Activated CD4-positive, alpha-beta T cell treated with anti-CD3 and anti-CD28 coated beads for 36 hours (primary cell): ENCODE measurements at regions of chr2 and their contacts with region 1.

Region 1: DNA sequence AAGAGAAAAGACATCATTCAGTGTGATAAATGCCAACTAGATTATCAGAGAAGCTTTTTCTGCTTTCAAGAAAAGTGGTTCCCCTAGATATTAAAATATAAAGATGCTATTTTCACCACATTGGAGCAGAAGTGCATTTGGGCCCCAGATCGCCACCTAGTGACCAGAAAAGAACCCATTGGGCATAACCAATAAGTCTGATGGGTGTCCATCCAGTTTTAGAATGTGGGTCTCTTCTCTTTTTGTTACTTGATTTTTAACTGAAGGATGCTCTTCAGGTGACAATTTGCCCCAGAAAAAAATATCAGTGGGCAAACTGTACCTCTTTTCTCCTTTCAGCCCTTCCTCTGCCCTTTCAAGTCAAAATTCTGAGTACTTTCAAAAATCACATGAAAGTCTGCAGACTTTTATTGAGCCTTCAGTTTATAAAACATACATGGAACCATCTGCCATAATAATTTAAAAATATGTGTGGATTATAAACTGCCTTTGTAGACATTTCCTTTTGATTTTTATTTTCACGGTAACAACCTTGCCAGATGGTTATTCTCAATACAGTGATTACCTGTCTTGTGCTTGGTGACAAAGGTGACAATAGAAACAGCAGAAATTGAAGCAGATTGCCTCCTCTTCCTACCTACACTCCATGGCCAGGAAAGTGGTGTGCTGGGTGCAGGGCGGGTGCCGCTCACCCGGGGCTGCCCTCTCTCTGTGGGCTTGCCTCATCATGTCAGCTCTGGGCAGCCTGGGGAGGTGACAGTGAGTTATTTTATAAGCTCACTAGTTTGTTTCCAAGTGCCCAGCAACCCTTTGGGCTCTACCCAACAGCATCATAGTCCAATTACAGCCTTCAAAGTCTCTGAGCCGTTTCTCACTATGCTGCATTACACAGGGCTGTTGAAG is 124.5 kb downstream of the DCDC2C start:
- DNase-seq: peak; percentile 37
- ATAC-seq: no peak
- H3K4me3 Mint-ChIP-seq: no peak overlapping the region
- H3K27ac Mint-ChIP-seq: no peak overlapping the region
- H3K4me1 Mint-ChIP-seq: no peaks in the 10 kb centered on the region
- H3K27me3 Mint-ChIP-seq: peaks cover 4% of the 10 kb centered on the region

Region 2: GRCh38 chr2:3728104-3729054 is 99.5 kb before region 1 on chr2:
- CTCF ChIA-PET with region 1: interaction called, 8 read pairs
- POLR2A ChIA-PET with region 1: no interaction called
- intact Hi-C with region 1: loop called (anchors 2 kb)
- DNase-seq: no peak
- ATAC-seq: no peak
- H3K4me3 Mint-ChIP-seq: no peak overlapping the region
- H3K27ac Mint-ChIP-seq: no peak overlapping the region
- H3K4me1 Mint-ChIP-seq: no peaks in the 10 kb centered on the region
- H3K27me3 Mint-ChIP-seq: peaks cover 2% of the 10 kb centered on the region